Mammary epithelial cell (primary cell): ENCODE measurements at regions of chr11 and their contacts with region 1.

Region 1: DNA sequence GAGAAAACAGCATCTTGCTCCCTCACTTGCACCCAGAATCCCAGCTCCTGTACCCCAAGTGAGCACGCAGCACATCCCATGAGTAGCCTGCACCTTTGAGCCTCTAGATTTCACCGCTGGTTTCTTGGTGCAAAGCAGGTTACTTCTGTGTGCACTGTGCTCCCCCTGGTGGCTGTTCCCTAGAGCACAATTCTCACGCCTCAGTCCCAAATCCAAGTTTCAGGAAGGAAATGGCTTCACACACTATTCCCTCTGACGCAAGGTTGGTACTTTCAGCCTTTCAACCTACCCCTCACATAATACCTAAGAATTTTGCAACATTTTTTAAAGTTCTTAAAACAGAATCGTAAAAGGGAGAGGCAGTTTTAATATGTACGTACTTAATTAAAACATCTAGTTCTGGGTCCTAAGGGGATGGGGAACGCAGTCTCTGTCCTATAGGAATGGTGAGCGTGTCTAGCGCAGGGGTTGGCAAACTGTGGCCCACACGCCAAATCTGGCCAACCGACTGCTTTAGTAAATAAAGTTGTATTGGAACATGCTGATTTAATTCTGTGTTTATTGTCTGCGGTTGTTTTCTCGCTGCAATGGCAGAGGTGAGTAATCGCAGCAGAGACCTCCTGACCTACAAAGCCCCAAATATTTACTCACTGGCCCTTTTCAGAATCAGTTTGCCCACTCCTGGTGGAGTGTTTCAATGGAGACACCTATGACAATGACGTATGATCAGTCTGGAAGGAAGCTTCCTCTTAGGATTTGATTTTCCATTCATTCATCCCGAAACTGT is 27.5 kb downstream of the DHCR7 start:
- DNase-seq: peak; percentile 21
- H3K4me3 ChIP-seq: no peak overlapping the region
- H3K27ac ChIP-seq: no peak overlapping the region
- H3K4me1 ChIP-seq: peaks cover 19% of the 10 kb centered on the region
- H3K27me3 ChIP-seq: no peaks in the 10 kb centered on the region
- CTCF ChIP-seq: peak; percentile 76 to 83

Region 2: DNA sequence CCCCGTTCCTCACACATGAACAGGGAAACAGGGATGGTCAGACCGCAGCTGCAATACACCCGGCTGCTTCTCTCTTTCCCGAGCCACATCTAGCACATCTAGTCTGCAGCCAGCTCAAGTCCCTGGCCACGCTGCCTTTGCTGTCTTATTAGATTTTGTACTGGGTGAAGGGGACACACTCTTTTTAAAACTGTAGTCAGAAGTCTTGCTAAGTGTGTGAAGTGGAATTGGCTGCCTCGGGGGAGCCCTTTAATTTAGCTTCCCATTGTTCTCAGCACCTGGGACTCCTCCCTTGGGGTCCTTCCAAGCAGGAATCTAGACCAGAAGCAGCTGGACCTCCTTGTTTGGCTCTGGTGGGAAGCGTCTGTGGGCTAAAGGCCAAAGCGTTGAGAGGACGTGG is 602.3 kb before region 1 on chr11:
- CTCF ChIA-PET with region 1: no interaction called
- dilution Hi-C with region 1: no loop called
- in situ Hi-C with region 1: no loop called
- intact Hi-C with region 1: loop called (anchors 5 kb)
- DNase-seq: no peak
- H3K4me3 ChIP-seq: no peak overlapping the region
- H3K27ac ChIP-seq: no peak overlapping the region
- H3K4me1 ChIP-seq: no peaks in the 10 kb centered on the region
- H3K27me3 ChIP-seq: no peaks in the 10 kb centered on the region
- CTCF ChIP-seq: no peak

Region 3: DNA sequence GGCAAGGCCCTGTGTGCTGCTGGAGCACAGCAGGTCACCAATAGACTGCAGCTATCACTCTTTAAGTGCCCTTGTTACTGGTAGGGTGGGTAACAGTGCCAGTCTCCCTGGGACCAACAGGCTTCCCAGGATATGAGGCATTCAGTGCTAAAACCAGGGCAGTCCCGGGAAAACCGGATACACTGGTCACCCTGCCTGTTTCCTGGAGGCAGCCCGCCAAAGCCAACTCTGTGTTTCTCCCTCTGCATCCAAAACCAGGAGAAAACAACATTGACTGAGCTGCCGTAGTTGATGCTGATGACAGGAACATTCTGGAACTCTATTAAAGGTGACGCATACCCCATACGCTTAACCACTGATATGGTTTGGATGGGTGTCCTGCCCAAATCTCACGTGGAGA is 317.4 kb before region 1 on chr11:
- CTCF ChIA-PET with region 1: no interaction called
- dilution Hi-C with region 1: loop called (anchors 10 kb)
- in situ Hi-C with region 1: no loop called
- intact Hi-C with region 1: no loop called
- DNase-seq: no peak
- H3K4me3 ChIP-seq: no peak overlapping the region
- H3K27ac ChIP-seq: no peak overlapping the region
- H3K4me1 ChIP-seq: no peaks in the 10 kb centered on the region
- H3K27me3 ChIP-seq: no peaks in the 10 kb centered on the region
- CTCF ChIP-seq: no peak

Region 4: GRCh38 chr11:71120490-71120896 is 300.2 kb before region 1 on chr11:
- CTCF ChIA-PET with region 1: no interaction called
- dilution Hi-C with region 1: no loop called
- in situ Hi-C with region 1: no loop called
- intact Hi-C with region 1: loop called (anchors 1 kb)
- DNase-seq: peak; percentile 48
- H3K4me3 ChIP-seq: no peak overlapping the region
- H3K27ac ChIP-seq: no peak overlapping the region
- H3K4me1 ChIP-seq: no peaks in the 10 kb centered on the region
- H3K27me3 ChIP-seq: no peaks in the 10 kb centered on the region
- CTCF ChIP-seq: peak; percentile 46 to 63

Region 5: GRCh38 chr11:71179898-71180605 is 240.6 kb before region 1 on chr11:
- CTCF ChIA-PET with region 1: no interaction called
- dilution Hi-C with region 1: no loop called
- in situ Hi-C with region 1: no loop called
- intact Hi-C with region 1: no loop called
- DNase-seq: peak; percentile 19
- H3K4me3 ChIP-seq: no peak overlapping the region
- H3K27ac ChIP-seq: no peak overlapping the region
- H3K4me1 ChIP-seq: peaks cover 14% of the 10 kb centered on the region
- H3K27me3 ChIP-seq: no peaks in the 10 kb centered on the region
- CTCF ChIP-seq: no peak

Region 6: DNA sequence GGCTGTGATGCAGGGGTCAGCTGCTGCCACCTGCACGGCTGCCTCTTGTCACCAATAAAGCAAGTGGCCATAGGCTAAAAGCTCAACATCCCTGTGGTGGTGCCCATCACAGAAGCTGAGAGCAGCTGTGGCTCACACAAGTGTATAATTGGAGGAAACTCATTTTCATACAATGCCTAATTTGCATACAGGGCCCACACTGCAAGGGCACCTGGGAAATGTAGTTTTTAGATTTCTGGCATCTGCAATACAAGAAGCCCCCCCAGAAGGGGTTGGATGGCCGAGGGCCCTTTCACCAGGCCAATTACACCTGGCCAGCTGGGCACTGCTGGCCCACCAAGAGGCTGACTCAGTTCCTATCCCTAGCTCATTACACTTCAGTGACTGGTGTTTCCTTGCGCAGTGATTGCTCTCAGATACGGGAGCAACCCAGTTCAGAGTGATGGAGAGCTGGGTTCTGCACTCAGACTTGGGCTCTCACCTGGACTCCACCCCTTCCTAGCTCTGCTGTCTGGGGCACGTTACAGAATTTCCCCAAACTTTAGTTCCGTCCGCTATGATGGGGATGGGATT is 87.3 kb before region 1 on chr11:
- CTCF ChIA-PET with region 1: no interaction called
- dilution Hi-C with region 1: loop called (anchors 5 kb)
- in situ Hi-C with region 1: no loop called
- intact Hi-C with region 1: no loop called
- DNase-seq: no peak
- H3K4me3 ChIP-seq: no peak overlapping the region
- H3K27ac ChIP-seq: no peak overlapping the region
- H3K4me1 ChIP-seq: no peaks in the 10 kb centered on the region
- H3K27me3 ChIP-seq: no peaks in the 10 kb centered on the region
- CTCF ChIP-seq: no peak

Region 7: GRCh38 chr11:71383461-71383860 is 37.2 kb before region 1 on chr11:
- CTCF ChIA-PET with region 1: no interaction called
- dilution Hi-C with region 1: loop called (anchors 5 kb)
- in situ Hi-C with region 1: no loop called
- intact Hi-C with region 1: no loop called
- DNase-seq: no peak
- H3K4me3 ChIP-seq: no peak overlapping the region
- H3K27ac ChIP-seq: no peak overlapping the region
- H3K4me1 ChIP-seq: no peaks in the 10 kb centered on the region
- H3K27me3 ChIP-seq: peaks cover 1% of the 10 kb centered on the region
- CTCF ChIP-seq: no peak

Region 8: DNA sequence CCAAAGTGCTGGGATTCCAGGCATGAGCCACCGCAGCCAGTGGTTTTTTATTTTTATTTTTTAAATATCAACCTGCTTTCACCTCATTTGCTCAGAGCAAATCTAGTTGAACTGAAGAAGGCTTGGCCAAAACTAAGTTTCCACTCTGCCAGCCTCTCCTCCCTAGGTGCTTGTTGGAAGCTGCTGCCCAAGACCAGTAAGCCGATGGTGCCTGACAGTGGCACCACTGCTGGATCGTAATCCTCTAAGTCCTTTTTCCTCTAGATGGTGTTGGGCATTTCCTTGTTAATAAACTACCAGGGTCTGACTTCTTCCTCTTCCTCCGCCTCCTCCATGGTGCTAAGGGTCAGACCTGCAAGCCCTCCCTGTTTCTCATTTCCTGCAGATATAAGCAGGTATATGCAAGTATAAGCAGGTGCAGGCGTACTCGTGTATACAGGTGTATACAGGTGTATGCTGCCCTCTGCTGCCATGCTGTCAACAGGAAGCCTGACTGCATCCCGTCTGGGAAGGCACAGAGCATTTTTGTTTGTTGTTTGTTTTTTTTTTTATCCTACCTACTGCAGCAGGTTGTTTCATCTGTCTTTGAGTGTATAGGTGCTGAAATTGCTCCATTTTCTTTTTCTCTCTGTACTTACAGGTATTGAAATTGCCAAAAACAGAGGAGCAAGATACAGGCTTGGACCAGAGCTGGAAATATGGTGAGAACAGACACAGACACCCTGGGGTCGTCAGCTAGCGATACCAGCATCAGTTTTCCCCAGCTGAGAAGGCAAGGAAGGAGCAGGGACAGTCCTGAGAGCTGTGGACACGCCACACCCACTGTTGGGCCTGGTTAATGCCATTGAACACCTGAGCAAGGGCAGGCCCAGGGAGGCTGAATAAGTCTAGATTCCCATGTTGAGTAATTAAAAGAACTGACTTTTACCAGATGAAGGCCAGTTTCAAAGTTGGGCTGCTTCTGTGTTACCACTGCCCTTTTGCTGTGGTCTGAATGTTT is 34.1 kb after region 1 on chr11:
- CTCF ChIA-PET with region 1: no interaction called
- dilution Hi-C with region 1: loop called (anchors 5 kb)
- in situ Hi-C with region 1: no loop called
- intact Hi-C with region 1: no loop called
- DNase-seq: no peak
- H3K4me3 ChIP-seq: no peak overlapping the region
- H3K27ac ChIP-seq: no peak overlapping the region
- H3K4me1 ChIP-seq: peaks cover 30% of the 10 kb centered on the region
- H3K27me3 ChIP-seq: no peaks in the 10 kb centered on the region
- CTCF ChIP-seq: peak; percentile 19 to 45